IMR-90 (cell line): ENCODE measurements at regions of chr16 and their contacts with region 1.

Region 1: GRCh38 chr16:23803591-23804123 is 32.1 kb upstream of the PRKCB start:
- DNase-seq: peak; percentile 8
- ATAC-seq: peak; percentile 86
- H3K4me3 ChIP-seq: no peak overlapping the region; the same call in 1 of the 2 replicates
- H3K27ac ChIP-seq: no peak overlapping the region
- H3K4me1 ChIP-seq: no peaks in the 10 kb centered on the region
- H3K27me3 ChIP-seq: no peaks in the 10 kb centered on the region
- CTCF ChIP-seq: peak; percentile 42
- POLR2A ChIP-seq: no peak
- RAD21 ChIP-seq: peak; percentile 36

Region 2: GRCh38 chr16:23081675-23082119 is 722.0 kb before region 1 on chr16:
- CTCF ChIA-PET with region 1: no interaction called
- POLR2A ChIA-PET with region 1: no interaction called
- dilution Hi-C with region 1: no loop called
- in situ Hi-C with region 1: no loop called
- intact Hi-C with region 1: no loop called
- DNase-seq: peak; percentile 35
- ATAC-seq: no peak
- H3K4me3 ChIP-seq: no peak overlapping the region
- H3K27ac ChIP-seq: no peak overlapping the region
- H3K4me1 ChIP-seq: no peaks in the 10 kb centered on the region
- H3K27me3 ChIP-seq: no peaks in the 10 kb centered on the region
- CTCF ChIP-seq: no peak
- POLR2A ChIP-seq: no peak
- RAD21 ChIP-seq: no peak

Region 3: DNA sequence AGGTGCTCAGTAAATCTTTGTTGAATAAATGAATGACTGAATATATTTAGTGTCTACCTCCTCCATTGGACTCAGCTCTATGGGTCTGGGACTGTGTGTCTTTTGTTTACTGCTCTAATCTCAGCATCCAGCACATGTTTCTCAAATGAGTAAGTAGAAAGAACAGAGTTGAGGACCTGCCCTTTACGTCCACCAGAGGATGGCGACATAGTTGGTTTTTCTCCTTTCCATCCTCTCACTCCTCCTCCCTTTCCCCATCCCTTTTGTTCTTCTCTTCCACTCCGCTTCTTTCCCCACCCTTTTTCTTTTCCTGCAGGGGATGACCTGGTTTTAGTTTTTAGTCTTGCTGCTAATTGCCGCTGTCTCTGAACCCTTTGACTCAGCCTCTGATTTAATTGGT is 60.9 kb before region 1 on chr16:
- CTCF ChIA-PET with region 1: no interaction called
- POLR2A ChIA-PET with region 1: no interaction called
- dilution Hi-C with region 1: no loop called
- in situ Hi-C with region 1: no loop called
- intact Hi-C with region 1: no loop called
- DNase-seq: no peak
- ATAC-seq: no peak
- H3K4me3 ChIP-seq: no peak overlapping the region
- H3K27ac ChIP-seq: no peak overlapping the region
- H3K4me1 ChIP-seq: no peaks in the 10 kb centered on the region
- H3K27me3 ChIP-seq: peaks cover 2% of the 10 kb centered on the region
- CTCF ChIP-seq: no peak
- POLR2A ChIP-seq: no peak
- RAD21 ChIP-seq: no peak

Region 4: DNA sequence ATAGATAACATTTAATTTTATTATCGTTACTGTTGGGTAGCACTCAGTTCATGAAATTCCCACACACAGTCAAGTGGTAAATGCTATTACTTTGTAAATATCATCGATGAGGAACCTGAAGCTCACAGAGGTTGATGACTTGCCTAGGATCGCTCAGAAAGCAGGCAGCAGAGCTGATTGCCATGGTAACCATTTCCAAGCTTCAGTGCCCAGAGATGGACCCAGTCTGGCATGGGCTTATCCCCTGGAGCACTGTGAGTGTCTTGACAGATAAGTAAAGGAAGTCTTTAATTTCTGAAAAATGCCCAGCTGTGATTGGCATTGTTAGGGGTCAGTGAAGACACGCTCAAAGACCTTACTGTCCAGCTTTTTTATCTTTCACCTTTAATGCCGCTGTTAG is 127.1 kb after region 1 on chr16:
- CTCF ChIA-PET with region 1: no interaction called
- POLR2A ChIA-PET with region 1: no interaction called
- dilution Hi-C with region 1: no loop called
- in situ Hi-C with region 1: no loop called
- intact Hi-C with region 1: no loop called
- DNase-seq: no peak
- ATAC-seq: no peak
- H3K4me3 ChIP-seq: no peak overlapping the region
- H3K27ac ChIP-seq: no peak overlapping the region
- H3K4me1 ChIP-seq: no peaks in the 10 kb centered on the region
- H3K27me3 ChIP-seq: no peaks in the 10 kb centered on the region
- CTCF ChIP-seq: no peak
- POLR2A ChIP-seq: no peak
- RAD21 ChIP-seq: no peak

Region 5: DNA sequence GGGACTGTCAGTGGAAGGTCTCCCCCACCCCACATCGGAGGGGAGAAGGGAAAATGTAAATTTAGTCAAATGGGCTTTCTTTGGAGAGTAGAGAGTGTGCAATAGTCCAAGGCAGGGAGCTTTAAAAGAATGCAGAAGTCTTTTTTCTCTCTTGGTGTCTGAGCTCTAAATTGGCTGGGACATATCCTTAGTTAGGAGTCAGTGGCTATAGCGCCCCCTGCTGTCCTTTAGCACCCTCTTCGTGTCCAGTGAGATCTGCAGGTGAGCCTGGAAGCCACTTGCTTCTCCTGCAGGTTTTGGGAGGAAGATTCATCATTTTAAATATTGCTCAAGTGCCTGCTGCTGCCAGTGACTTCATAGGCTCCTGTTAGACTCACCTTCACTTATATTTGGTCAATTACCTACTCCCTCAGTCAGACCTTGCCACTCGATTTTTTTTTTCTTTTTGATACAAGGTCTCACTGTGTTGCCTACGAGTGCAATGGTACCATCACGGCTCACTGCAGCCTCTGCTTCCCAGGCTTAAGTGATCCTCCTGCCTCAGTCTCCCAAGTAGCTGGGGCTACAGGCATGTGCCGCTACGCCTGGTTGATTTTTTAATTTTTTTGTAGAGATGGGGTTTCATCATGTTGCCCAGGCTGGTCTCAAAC is 206.9 kb after region 1 on chr16:
- CTCF ChIA-PET with region 1: interaction called, 5 read pairs
- POLR2A ChIA-PET with region 1: no interaction called
- dilution Hi-C with region 1: no loop called
- in situ Hi-C with region 1: loop called (anchors 10 kb)
- intact Hi-C with region 1: loop called (anchors 1 kb)
- DNase-seq: peak; percentile 65
- ATAC-seq: peak; percentile 71
- H3K4me3 ChIP-seq: no peak overlapping the region
- H3K27ac ChIP-seq: no peak overlapping the region
- H3K4me1 ChIP-seq: no peaks in the 10 kb centered on the region
- H3K27me3 ChIP-seq: no peaks in the 10 kb centered on the region
- CTCF ChIP-seq: peak; percentile 69
- POLR2A ChIP-seq: no peak
- RAD21 ChIP-seq: peak; percentile 65

Region 6: GRCh38 chr16:24163935-24164334 is 360.3 kb after region 1 on chr16:
- CTCF ChIA-PET with region 1: no interaction called
- POLR2A ChIA-PET with region 1: interaction called, 10 read pairs
- dilution Hi-C with region 1: no loop called
- in situ Hi-C with region 1: no loop called
- intact Hi-C with region 1: no loop called
- DNase-seq: no peak
- ATAC-seq: no peak
- H3K4me3 ChIP-seq: no peak overlapping the region
- H3K27ac ChIP-seq: no peak overlapping the region
- H3K4me1 ChIP-seq: no peaks in the 10 kb centered on the region
- H3K27me3 ChIP-seq: no peaks in the 10 kb centered on the region
- CTCF ChIP-seq: no peak
- POLR2A ChIP-seq: no peak
- RAD21 ChIP-seq: no peak

Region 7: GRCh38 chr16:25390761-25391160 is 1587.1 kb after region 1 on chr16:
- CTCF ChIA-PET with region 1: no interaction called
- POLR2A ChIA-PET with region 1: no interaction called
- dilution Hi-C with region 1: no loop called
- in situ Hi-C with region 1: no loop called
- intact Hi-C with region 1: no loop called
- DNase-seq: no peak
- ATAC-seq: no peak
- H3K4me3 ChIP-seq: no peak overlapping the region
- H3K27ac ChIP-seq: no peak overlapping the region
- H3K4me1 ChIP-seq: no peaks in the 10 kb centered on the region
- H3K27me3 ChIP-seq: no peaks in the 10 kb centered on the region
- CTCF ChIP-seq: no peak
- POLR2A ChIP-seq: no peak
- RAD21 ChIP-seq: no peak